A673 (cell line): ENCODE measurements at regions of chr13 and their contacts with region 1.

Region 1: DNA sequence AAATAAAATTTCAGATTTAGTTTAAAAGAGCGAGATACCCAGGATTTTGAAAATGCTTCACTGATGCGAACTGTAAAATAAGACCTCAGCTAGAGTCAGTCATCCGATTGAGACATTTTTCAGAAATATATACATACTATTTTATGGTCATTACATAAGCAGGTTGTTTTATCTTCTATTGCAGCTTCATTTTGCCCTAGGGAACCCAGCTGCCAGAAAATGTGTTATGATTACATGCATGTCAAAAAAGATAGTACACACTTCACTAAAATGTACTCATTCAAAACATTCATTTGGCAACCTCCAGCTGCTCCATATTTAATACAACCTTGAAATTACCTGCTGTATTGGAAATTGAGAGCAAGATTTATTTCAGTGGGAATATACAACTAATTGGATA is 483.8 kb upstream of the SLITRK6 start:
- DNase-seq: no peak
- H3K4me3 ChIP-seq: no peak overlapping the region
- H3K27ac ChIP-seq: no peak overlapping the region
- H3K4me1 ChIP-seq: no peaks in the 10 kb centered on the region
- H3K27me3 ChIP-seq: no peaks in the 10 kb centered on the region
- CTCF ChIP-seq: no peak

Region 2: DNA sequence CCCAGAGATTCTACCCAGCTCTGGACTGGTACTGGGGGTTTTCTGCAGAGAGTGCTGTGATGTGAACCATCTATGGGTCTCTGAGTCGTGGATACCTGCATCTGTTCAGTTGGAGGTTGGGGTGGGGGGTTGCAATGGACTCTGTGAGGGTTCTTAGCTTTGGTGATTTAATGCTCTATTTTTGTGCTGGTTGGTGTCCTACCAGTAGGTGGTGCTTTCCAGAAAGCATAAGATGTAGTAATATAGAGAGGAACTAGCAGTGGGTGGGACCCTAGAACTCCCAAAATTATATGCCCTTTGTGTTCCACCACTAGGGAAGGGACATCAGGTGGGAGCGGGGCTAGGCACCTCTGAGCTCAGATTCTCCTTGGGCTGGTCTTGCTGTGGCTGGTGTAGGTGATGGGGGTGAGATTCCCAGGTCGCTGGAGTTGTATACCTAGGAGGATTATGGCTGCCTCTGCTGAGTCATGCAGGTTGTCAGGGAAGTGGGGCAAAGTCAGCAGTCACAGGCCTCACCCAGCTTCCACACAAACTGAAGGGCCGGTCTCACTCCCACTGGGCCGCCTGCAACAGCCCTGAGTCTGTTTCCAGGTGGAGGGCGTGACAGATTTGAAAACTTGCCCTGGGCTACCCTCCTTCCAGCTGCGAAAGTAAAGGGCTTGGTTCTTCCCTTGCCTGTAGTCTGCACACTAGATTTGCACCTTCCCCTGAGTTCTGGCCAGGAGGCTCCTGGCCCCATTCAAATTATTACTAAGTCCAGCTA is 1827.7 kb before region 1 on chr13:
- CTCF ChIA-PET with region 1: interaction called, 10 read pairs
- POLR2A ChIA-PET with region 1: no interaction called
- intact Hi-C with region 1: no loop called
- DNase-seq: no peak
- H3K4me3 ChIP-seq: no peak overlapping the region
- H3K27ac ChIP-seq: no peak overlapping the region
- H3K4me1 ChIP-seq: no peaks in the 10 kb centered on the region
- H3K27me3 ChIP-seq: no peaks in the 10 kb centered on the region
- CTCF ChIP-seq: 0 out of 2 replicates have a peak, but pooled peaks have one; percentile 34

Region 3: GRCh38 chr13:85864963-85865530 is 418.0 kb before region 1 on chr13:
- CTCF ChIA-PET with region 1: no interaction called
- POLR2A ChIA-PET with region 1: no interaction called
- intact Hi-C with region 1: no loop called
- DNase-seq: peak; percentile 49
- H3K4me3 ChIP-seq: no peak overlapping the region
- H3K27ac ChIP-seq: no peak overlapping the region
- H3K4me1 ChIP-seq: no peaks in the 10 kb centered on the region
- H3K27me3 ChIP-seq: no peaks in the 10 kb centered on the region
- CTCF ChIP-seq: peak; percentile 54